Activated CD4-positive, alpha-beta T cell treated with anti-CD3 and anti-CD28 coated beads for 36 hours (primary cell): ENCODE measurements at regions of chr17 and their contacts with region 1.

Region 1: GRCh38 chr17:75784473-75785015 is at the start of gene UNK:
- DNase-seq: peak; percentile 97
- ATAC-seq: peak; percentile 67
- H3K4me3 Mint-ChIP-seq: peak within 1 kb of the TSS; percentile 91
- H3K27ac Mint-ChIP-seq: peak within 1 kb of the TSS; percentile 100
- H3K4me1 Mint-ChIP-seq: peaks cover 55% of the 10 kb centered on the region
- H3K27me3 Mint-ChIP-seq: peaks cover 1% of the 10 kb centered on the region
- total RNA-seq, gene UNK: 24.5 to 33.7 TPM

Region 2: GRCh38 chr17:75764711-75765421 is 19.7 kb before region 1 on chr17 and contains the start of gene GALK1:
- CTCF ChIA-PET with region 1: interaction called, 16 read pairs
- POLR2A ChIA-PET with region 1: interaction called, 9 read pairs
- intact Hi-C with region 1: loop called in 1 of 2 experiments (anchors 1 kb)
- DNase-seq: peak; percentile 90
- ATAC-seq: peak; percentile 95
- H3K4me3 Mint-ChIP-seq: peak within 1 kb of the TSS; percentile 80
- H3K27ac Mint-ChIP-seq: peak within 1 kb of the TSS; percentile 83
- H3K4me1 Mint-ChIP-seq: peaks cover 3% of the 10 kb centered on the region
- H3K27me3 Mint-ChIP-seq: no peaks in the 10 kb centered on the region
- total RNA-seq, gene GALK1: 50.3 to 63.2 TPM

Region 3: DNA sequence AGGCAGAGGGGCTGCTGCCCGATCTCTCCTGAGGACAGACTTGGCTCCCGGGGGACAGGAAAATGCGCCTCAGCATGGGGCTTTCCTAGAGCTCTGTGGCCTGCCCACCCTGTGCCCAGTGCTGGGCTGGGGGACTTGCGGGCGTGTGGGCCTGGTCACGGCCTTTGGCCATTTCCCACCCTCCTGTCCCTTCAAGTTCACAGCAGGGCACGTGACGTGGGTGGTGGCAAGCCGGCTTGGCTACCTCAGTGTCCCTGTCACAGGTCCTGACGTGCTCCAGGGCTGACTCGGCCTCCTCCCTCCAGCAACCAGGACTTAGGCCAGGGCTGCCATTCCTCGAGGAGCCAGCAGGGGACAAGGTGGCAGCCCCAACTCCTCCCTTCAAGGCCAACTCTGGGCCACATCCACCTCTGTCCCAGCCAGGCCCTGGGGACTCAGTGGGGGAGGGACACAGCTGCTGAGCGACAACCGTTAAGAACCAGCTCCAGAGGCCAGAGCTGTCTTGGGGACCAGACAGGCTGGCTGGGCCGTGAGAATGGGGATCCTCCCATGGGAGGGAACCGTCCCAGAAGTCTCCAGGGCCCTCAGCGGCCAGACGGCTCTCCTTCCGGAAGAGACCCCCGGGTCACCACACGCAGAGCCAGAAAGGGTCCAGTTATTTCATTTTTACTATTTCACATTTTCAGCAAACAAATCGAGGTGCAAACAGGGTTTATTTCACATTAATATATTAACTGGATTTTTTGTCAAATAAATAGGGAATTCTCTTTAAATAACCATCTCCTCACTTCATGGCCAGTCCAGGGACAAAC is 60.7 kb after region 1 on chr17:
- CTCF ChIA-PET with region 1: interaction called, 21 read pairs
- POLR2A ChIA-PET with region 1: interaction called, 17 read pairs
- intact Hi-C with region 1: loop called in 1 of 2 experiments (anchors 5 kb)
- DNase-seq: peak; percentile 85
- ATAC-seq: peak; percentile 71
- H3K4me3 Mint-ChIP-seq: peak overlapping the region; percentile 55
- H3K27ac Mint-ChIP-seq: peak overlapping the region; percentile 60
- H3K4me1 Mint-ChIP-seq: peaks cover 14% of the 10 kb centered on the region
- H3K27me3 Mint-ChIP-seq: no peaks in the 10 kb centered on the region

Region 4: GRCh38 chr17:75940724-75941441 is 156.3 kb after region 1 on chr17 and contains the start of gene FBF1:
- CTCF ChIA-PET with region 1: no interaction called
- POLR2A ChIA-PET with region 1: no interaction called
- intact Hi-C with region 1: loop called in 1 of 2 experiments (anchors 1 kb)
- DNase-seq: peak; percentile 94
- ATAC-seq: peak; percentile 100
- H3K4me3 Mint-ChIP-seq: peak within 1 kb of the TSS; percentile 92
- H3K27ac Mint-ChIP-seq: peak within 1 kb of the TSS; percentile 82
- H3K4me1 Mint-ChIP-seq: peaks cover 13% of the 10 kb centered on the region
- H3K27me3 Mint-ChIP-seq: no peaks in the 10 kb centered on the region
- total RNA-seq, gene FBF1: 16.2 to 18.0 TPM

Region 5: GRCh38 chr17:76048025-76048605 is 263.6 kb after region 1 on chr17:
- CTCF ChIA-PET with region 1: no interaction called
- POLR2A ChIA-PET with region 1: no interaction called
- intact Hi-C with region 1: no loop called
- DNase-seq: no peak
- ATAC-seq: no peak
- H3K4me3 Mint-ChIP-seq: no peak overlapping the region
- H3K27ac Mint-ChIP-seq: peak overlapping the region; percentile 1
- H3K4me1 Mint-ChIP-seq: peaks cover 24% of the 10 kb centered on the region
- H3K27me3 Mint-ChIP-seq: no peaks in the 10 kb centered on the region

Region 6: GRCh38 chr17:76384222-76384986 is 599.9 kb after region 1 on chr17 and contains the start of gene SPHK1:
- CTCF ChIA-PET with region 1: no interaction called
- POLR2A ChIA-PET with region 1: no interaction called
- intact Hi-C with region 1: loop called in 1 of 2 experiments (anchors 10 kb)
- DNase-seq: peak; percentile 86
- ATAC-seq: peak; percentile 72
- H3K4me3 Mint-ChIP-seq: peak within 1 kb of the TSS; percentile 85
- H3K27ac Mint-ChIP-seq: peak within 1 kb of the TSS; percentile 81
- H3K4me1 Mint-ChIP-seq: peaks cover 12% of the 10 kb centered on the region
- H3K27me3 Mint-ChIP-seq: no peaks in the 10 kb centered on the region
- total RNA-seq, gene SPHK1: 7.4 to 11.7 TPM